Sciatic nerve (tissue), 2 donors: ENCODE measurements at regions of chr2 and their contacts with region 1.

Region 1: DNA sequence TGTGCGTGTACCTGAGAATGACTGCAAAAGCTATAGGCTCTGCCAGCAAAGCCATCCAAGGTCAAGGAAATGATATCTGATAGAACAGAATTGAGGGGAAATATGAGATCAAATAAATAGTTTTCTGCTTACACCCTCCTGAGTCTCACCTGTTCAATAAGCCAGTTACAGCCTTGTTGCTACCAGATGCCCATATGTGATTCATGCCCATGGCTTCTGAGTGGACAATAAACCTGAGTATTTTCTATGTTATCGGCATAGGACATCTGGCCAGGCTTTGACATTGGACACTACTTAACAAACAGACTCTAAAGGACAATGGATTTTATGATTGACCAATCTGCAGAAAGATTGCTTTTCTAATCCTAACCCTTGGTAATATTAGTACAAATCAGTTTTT is 297.9 kb downstream of the LRATD1 start:
- DNase-seq: no peak
- ATAC-seq: no peak

Region 2: DNA sequence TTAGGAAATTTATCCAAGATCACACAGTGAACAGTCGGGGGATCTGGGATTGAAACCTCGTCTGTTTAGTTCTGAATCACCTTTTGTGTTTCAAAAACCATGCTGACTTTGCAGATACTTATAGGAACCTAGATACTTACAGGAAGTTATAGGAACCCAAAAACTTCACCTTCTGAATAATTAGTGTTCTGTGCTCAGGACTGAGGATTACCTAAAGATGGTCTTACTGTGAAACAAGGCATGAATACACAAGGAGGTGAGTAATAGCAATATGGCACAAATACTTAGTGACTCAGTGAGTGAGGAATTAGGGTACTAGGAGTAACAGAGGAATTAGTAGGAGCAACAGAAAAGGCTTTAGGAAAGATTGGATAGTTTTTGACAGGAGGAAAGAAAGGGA is 152.4 kb before region 1 on chr2:
- intact Hi-C with region 1: loop called (anchors 2 kb)
- DNase-seq: no peak
- ATAC-seq: no peak